HepG2 (cell line): ENCODE measurements at regions of chr3 and their contacts with region 1.

Region 1: DNA sequence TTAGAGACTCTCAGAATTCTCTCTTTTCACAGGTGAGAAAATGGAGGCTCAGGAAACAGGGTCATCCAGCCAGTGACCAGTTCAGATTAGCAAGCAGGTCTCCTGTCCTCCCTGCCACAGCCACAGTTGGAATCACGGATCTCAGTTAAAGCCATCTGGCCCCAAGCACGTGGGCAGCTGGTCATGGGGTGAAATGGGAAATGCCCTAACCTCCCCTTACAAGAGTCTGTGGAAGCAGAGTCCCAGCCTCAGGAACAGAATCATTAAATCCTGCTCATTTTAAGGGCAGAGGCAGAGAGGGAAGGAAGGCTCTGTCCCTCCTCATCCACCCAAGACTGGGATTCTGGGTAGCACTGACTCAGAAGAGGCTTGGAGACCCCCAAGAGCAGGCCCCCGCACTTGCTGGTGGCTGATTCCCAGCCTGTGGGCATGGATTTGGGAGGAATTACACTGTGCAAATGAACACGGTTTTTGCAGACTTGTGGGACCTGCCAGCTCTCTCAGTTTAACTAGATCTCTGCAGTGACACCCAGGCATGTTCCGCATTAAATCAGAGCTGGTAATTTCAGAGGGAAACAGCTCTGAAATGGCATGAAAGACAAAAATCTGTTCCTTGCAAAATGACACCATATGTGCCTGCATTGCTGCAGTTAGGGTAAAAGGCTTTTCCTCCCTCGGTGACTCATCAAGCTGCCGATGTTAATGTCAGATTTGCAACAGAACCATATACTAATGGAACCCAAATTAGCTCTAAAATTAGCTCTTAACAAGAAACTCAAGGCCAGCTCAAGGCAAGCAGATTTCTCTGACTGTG is 89.0 kb downstream of the BDH1 start:
- DNase-seq: no peak
- ATAC-seq: 0 out of 3 replicates have a peak, but pooled peaks have one; percentile 1
- H3K4me3 ChIP-seq: peak overlapping the region; percentile 28 to 56 (median 36); a peak in 5 of 6 replicates
- H3K27ac ChIP-seq: peak overlapping the region; percentile 96
- H3K4me1 ChIP-seq: peaks cover 87% of the 10 kb centered on the region
- H3K27me3 ChIP-seq: no peaks in the 10 kb centered on the region
- CTCF ChIP-seq: no peak
- EP300 ChIP-seq: no peak
- POLR2A ChIP-seq: peak in 1 of 2 experiments; percentile 10; a peak in 1 of 4 replicates
- RAD21 ChIP-seq: no peak

Region 2: GRCh38 chr3:197298341-197298857 is 168.4 kb before region 1 on chr3 and contains the start of gene DLG1:
- CTCF ChIA-PET with region 1: no interaction called
- POLR2A ChIA-PET with region 1: interaction called, 17 read pairs
- in situ Hi-C with region 1: no loop called
- intact Hi-C with region 1: loop called (anchors 5 kb)
- DNase-seq: peak; percentile 88
- ATAC-seq: peak; percentile 78
- H3K4me3 ChIP-seq: peak within 1 kb of the TSS; percentile 91 to 95 (median 94)
- H3K27ac ChIP-seq: peak within 1 kb of the TSS; percentile 98
- H3K4me1 ChIP-seq: peaks cover 54% of the 10 kb centered on the region
- H3K27me3 ChIP-seq: no peaks in the 10 kb centered on the region; a peak in 1 of 5 replicates
- CTCF ChIP-seq: no peak
- EP300 ChIP-seq: no peak
- POLR2A ChIP-seq: peak; percentile 87 to 88
- RAD21 ChIP-seq: peak; percentile 49; the same call in 1 of the 2 replicates
- total RNA-seq, gene DLG1: 104 and 105 TPM in 2 replicates

Region 3: DNA sequence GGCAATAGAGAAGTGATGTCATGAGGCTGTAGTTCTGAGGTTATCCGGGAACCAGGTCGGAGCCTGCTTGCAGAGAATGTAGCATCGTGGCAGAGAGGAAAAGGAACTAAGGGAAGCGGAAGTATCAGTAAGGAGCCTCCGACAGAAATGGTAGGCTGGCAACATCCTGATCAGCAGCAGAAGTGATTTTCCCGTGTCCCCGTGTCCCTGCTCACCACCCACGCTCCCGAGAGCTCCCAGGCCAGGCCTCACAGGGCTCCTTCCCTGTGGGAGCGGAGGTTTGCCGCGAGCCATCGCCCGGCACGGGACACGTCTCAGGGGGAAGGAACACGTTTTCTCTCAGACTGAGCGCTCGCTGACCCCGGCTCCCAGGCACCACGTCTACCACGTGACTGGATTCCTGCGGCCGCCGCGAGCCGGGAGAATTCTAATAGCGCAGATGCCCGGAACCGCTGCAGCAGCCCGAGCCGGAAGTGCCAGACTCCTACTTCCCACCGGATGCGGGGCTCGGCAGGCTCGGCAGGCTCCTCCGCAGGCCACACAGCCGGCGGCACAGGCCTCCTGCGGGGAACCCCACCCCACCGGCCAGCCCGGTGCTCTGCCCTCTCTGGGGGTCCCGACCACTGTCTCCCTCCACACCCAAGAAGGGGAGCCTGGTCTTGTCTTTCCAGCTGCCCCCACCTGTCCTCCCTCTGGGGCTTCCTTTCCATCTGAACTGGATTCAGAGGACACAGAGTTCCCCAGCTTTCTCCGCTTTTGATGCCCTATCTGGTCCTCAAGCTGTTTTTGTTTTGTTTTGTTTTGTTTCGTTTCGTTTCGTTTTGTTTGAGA is 10.3 kb before region 1 on chr3:
- CTCF ChIA-PET with region 1: no interaction called
- POLR2A ChIA-PET with region 1: interaction called, 19 read pairs
- in situ Hi-C with region 1: no loop called
- intact Hi-C with region 1: no loop called
- DNase-seq: peak; percentile 69
- ATAC-seq: peak; percentile 72
- H3K4me3 ChIP-seq: peak overlapping the region; percentile 56 to 67 (median 64); a peak in 5 of 6 replicates
- H3K27ac ChIP-seq: peak overlapping the region; percentile 82
- H3K4me1 ChIP-seq: peaks cover 52% of the 10 kb centered on the region
- H3K27me3 ChIP-seq: no peaks in the 10 kb centered on the region
- CTCF ChIP-seq: no peak
- EP300 ChIP-seq: no peak
- POLR2A ChIP-seq: peak; percentile 67 to 75
- RAD21 ChIP-seq: no peak; the same call in 1 of the 2 replicates

Region 4: GRCh38 chr3:197491923-197492664 is 25.3 kb after region 1 on chr3:
- CTCF ChIA-PET with region 1: no interaction called
- POLR2A ChIA-PET with region 1: interaction called, 11 read pairs
- in situ Hi-C with region 1: no loop called
- intact Hi-C with region 1: loop called (anchors 2 kb)
- DNase-seq: peak; percentile 85
- ATAC-seq: peak; percentile 91
- H3K4me3 ChIP-seq: peak overlapping the region in 1 of 3 experiments; percentile 24; a peak in 1 of 6 replicates
- H3K27ac ChIP-seq: peak overlapping the region; percentile 32
- H3K4me1 ChIP-seq: peaks cover 90% of the 10 kb centered on the region
- H3K27me3 ChIP-seq: no peaks in the 10 kb centered on the region
- CTCF ChIP-seq: 0 out of 2 replicates have a peak, but pooled peaks have one; percentile 10
- EP300 ChIP-seq: peak in 1 of 2 experiments; percentile 42; a peak in 1 of 4 replicates
- POLR2A ChIP-seq: no peak
- RAD21 ChIP-seq: peak; percentile 57; the same call in 1 of the 2 replicates